ENCODE measurements at regions of chr6 and their contacts with region 1.

Region 1: GRCh38 chr6:112163295-112164257 is 76.2 kb downstream of the FAM229B start:
- DNase-seq: peak; percentile 35 to 45
- ATAC-seq: peak; percentile 99 to 100
- H3K4me3 ChIP-seq: no peak overlapping the region
- H3K27ac ChIP-seq: no peak overlapping the region
- H3K4me1 ChIP-seq: no peaks in the 10 kb centered on the region
- CTCF ChIP-seq: peak; percentile 66
- EP300 ChIP-seq: no peak
- POLR2A ChIP-seq: no peak
- RAD21 ChIP-seq: peak; percentile 65 to 74

Region 2: DNA sequence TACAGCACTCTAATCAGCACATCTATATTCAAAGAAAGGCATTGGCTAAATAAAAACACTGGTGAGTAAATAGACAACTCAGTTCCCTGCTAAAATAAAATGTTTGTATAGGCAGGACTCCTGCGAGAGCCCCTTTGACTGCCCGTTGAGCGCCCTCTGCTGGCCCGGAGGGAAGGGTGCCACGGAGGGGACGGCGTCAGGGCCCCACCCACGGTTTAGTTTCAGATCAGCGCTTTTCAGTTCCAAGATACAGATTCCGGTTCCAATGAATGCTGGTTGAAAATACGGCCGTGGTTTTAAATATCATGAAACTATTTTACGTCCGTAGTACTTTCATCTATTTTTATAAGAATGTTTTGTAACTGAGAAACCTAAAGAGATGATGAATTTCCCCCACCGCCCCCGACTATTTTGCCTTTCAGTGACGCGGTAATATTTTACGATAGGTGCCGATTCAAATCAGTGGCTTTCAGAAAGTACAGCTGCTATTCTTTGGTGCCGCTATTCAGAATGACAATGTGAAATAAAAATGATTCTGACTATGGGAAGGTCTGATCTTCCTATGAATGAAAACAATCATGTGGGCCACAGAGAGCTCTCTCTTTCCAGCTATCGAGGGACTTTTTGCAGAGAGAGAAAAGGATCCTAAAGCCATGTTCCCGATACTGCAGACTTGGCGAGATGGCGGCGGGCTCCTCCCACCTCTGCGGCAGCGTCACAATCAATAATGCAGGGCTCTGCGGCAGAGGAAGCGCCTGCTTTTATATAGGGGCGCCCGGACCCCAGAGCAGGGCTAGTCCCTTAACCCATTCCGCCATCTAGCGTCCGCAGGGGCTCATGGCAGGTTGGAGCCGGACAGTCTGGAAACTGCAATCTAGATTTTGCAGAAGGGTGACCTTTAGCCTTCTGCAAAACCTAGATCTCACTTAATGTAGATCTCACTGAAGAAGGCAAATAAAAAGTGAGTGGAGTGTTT is 120.3 kb before region 1 on chr6:
- CTCF ChIA-PET with region 1: interaction called, 10 read pairs
- POLR2A ChIA-PET with region 1: no interaction called
- DNase-seq: peak; percentile 68 to 86
- ATAC-seq: peak; percentile 98 to 99
- H3K4me3 ChIP-seq: peak overlapping the region; percentile 70
- H3K27ac ChIP-seq: peak overlapping the region; percentile 80 to 85
- H3K4me1 ChIP-seq: peaks cover under 1% of the 10 kb centered on the region; the same call in 1 of the 3 replicates
- CTCF ChIP-seq: peak; percentile 71
- EP300 ChIP-seq: no peak
- POLR2A ChIP-seq: 0 out of 2 replicates have a peak, but pooled peaks have one; percentile 19
- RAD21 ChIP-seq: peak; percentile 83 to 87

Region 3: DNA sequence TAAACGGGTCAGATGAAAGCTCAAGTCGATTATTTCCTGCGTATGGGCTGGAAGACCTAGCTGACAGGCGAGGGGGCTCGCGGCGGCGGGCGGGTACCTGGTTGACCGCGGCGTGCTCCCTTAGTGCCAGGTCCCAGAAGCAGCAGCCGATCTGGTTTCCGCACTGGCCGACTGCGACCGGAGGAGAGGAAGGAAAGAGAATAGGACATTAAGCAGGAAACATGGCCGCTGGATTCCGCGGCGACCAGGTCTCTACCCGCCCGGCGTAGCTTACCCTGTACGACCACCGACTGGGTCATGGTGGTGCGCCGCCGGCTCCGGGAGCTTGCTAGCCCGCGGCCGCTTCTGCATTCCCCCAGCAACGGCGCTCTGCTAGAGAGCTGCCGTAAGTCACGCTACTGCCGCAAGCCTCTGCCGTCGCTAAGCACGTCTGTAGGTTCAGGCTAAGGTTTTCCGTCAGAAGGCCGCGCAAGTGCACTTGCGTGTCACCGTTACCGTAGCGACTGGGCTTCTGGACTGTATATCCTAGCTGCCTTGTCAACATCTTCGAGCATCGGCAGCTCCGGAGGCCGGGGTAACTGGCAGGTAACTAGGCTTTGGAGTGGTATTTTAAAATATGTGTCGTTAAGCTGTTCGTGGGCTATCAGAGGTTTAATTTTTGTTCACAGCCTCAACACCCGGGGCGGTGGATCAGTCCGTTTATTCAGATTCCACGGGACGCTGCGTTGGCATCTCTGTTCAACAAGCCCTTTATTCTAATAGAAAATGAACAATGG is 76.3 kb before region 1 on chr6 and contains the starts of genes FAM229B and TUBE1:
- CTCF ChIA-PET with region 1: interaction called, 34 read pairs
- POLR2A ChIA-PET with region 1: no interaction called
- DNase-seq: peak; percentile 39 to 95
- ATAC-seq: peak; percentile 95 to 96
- H3K4me3 ChIP-seq: peak within 1 kb of the TSS; percentile 80
- H3K27ac ChIP-seq: peak within 1 kb of the TSS; percentile 84 to 90
- H3K4me1 ChIP-seq: peaks cover 6% of the 10 kb centered on the region; the same call in 2 of the 3 replicates
- CTCF ChIP-seq: no peak
- EP300 ChIP-seq: no peak
- POLR2A ChIP-seq: peak; percentile 61
- RAD21 ChIP-seq: no peak
- polyA plus RNA-seq, gene FAM229B: 17.3 and 20.2 TPM in 2 replicates
- polyA plus RNA-seq, gene TUBE1: 20.3 and 32.5 TPM in 2 replicates

Region 4: GRCh38 chr6:112289038-112289566 is 125.5 kb after region 1 on chr6:
- CTCF ChIA-PET with region 1: no interaction called
- POLR2A ChIA-PET with region 1: no interaction called
- DNase-seq: no peak
- ATAC-seq: no peak
- H3K4me3 ChIP-seq: no peak overlapping the region
- H3K27ac ChIP-seq: no peak overlapping the region
- H3K4me1 ChIP-seq: no peaks in the 10 kb centered on the region
- CTCF ChIP-seq: no peak
- EP300 ChIP-seq: no peak
- POLR2A ChIP-seq: no peak
- RAD21 ChIP-seq: no peak

Measured in A549 (cell line).